Uterus (tissue), 4 donors: ENCODE measurements at regions of chr17 and their contacts with region 1.

Region 1: DNA sequence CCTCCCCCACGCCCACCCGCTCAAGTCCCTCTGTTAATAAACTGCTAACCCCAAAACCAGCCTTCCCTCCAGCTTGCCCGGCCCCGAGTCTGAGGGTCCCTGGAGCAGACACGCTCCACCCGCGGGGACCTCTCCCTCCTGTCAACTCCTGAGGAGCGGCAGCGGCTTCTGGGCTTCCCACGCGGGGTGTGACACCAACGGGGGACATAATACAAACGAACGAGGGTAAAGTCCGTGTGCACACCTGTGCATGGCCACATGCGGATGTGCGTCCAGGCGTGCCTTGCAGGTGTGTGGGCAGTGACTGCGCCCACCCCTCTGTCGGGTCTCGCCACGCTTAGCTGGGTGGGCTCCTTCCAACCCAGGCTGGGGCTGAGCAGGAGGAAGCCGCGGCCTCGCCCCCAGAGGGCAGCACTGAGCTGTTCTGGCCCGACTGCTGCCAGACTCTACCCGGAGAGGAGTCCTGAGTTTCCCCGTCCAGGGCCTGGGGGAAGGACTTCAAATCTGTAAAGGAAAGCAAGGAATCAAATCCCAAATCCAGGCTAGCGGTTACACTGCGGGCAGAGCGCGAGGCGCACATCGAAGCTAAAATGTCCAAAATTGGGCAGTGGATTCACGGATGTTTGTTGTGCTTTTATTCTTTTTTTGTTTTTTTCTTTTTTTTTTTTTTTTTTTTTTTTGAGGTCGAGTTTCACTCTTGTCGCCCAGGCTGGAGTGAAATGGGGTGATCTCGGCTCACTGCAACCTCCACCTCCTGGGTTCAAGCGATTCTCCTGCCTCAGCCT is 24.2 kb upstream of the KRT17 start:
- DNase-seq: peak; percentile 82 to 85
- H3K4me3 ChIP-seq: peak overlapping the region; percentile 17 to 30
- H3K27ac ChIP-seq: peak overlapping the region; percentile 69 to 70
- H3K4me1 ChIP-seq: no peaks in the 10 kb centered on the region
- H3K27me3 ChIP-seq: no peaks in the 10 kb centered on the region
- CTCF ChIP-seq: peak; percentile 91 to 94 (median 92)
- POLR2A ChIP-seq: peak in 1 of 2 donors; percentile 9

Region 2: DNA sequence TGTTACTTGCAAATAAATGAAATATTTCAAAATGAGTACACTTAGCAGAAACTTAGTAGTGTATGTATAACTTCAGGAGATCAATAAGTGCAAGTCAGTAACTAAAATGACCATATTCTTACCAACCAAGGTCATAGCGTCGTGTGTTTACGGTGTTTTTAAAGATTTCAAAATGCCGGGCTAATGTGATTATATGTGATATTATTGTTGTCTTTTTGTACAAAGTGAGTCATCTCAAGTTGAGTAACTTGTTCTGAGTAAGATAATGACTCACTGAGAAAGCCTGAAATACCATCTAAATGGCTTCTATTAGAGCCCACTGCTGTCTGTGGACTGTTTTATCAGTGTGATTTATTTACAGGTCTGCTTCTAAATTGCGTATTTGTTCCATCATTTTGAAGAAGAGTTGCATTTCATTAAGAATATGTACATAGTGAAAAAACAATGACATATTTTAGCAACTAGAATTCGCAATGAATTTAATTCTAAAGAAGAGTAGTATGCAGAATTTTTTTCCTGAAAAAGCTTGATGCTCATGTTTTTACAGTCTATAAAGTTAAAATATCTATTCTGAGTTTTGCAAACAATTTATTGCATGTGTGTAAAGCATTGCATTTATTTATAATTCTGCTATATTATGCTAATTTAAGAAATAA is 794.3 kb before region 1 on chr17:
- intact Hi-C with region 1: loop called (anchors 10 kb)
- DNase-seq: no peak
- H3K4me3 ChIP-seq: no peak overlapping the region
- H3K27ac ChIP-seq: peak overlapping the region; percentile 18 to 66
- H3K4me1 ChIP-seq: peaks cover 0 to 9% of the 10 kb centered on the region in 2 donors
- H3K27me3 ChIP-seq: no peaks in the 10 kb centered on the region
- CTCF ChIP-seq: no peak
- POLR2A ChIP-seq: no peak

Region 3: DNA sequence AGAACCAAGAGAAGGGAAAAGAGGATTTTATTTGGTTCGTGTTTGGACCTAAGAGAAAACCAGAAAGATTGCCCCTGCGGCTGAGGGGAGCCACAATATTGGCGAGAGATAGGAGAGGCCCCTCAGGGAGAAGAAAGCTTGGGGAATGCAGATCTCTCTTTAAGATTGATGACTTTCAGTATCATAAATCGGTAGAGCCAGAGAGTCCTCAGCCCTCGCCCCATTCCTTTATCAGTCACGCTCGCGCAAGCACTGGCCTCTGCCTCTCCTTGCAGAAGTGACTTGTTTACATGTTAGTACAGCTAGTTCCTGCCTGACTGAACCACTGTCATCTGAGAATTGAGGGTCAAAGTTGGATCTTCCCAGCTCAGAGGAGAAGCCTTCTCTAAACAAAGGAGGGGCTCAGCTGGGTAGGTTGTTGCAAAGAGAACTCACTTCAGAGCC is 99.0 kb before region 1 on chr17:
- intact Hi-C with region 1: loop called (anchors 5 kb)
- DNase-seq: peak in 1 of 2 donors; percentile 40
- H3K4me3 ChIP-seq: no peak overlapping the region
- H3K27ac ChIP-seq: peak overlapping the region; percentile 85 to 89
- H3K4me1 ChIP-seq: peaks cover 0 to 9% of the 10 kb centered on the region in 2 donors
- H3K27me3 ChIP-seq: no peaks in the 10 kb centered on the region
- CTCF ChIP-seq: no peak
- POLR2A ChIP-seq: no peak